Activated B cell treated with CpG ODN at 0.5 μM for 24 hours (primary cell): ENCODE measurements at regions of chr12 and their contacts with region 1.

Region 1: GRCh38 chr12:49188914-49189367 is at the start of gene TUBA1A:
- DNase-seq: peak; percentile 83
- ATAC-seq: peak; percentile 86
- H3K4me3 Mint-ChIP-seq: peak within 1 kb of the TSS; percentile 97
- H3K27ac Mint-ChIP-seq: peak within 1 kb of the TSS; percentile 99
- H3K4me1 Mint-ChIP-seq: peaks cover 20% of the 10 kb centered on the region
- H3K27me3 Mint-ChIP-seq: no peaks in the 10 kb centered on the region
- CTCF ChIP-seq: no peak
- total RNA-seq, gene TUBA1A: 114 and 115 TPM in 2 replicates

Region 2: DNA sequence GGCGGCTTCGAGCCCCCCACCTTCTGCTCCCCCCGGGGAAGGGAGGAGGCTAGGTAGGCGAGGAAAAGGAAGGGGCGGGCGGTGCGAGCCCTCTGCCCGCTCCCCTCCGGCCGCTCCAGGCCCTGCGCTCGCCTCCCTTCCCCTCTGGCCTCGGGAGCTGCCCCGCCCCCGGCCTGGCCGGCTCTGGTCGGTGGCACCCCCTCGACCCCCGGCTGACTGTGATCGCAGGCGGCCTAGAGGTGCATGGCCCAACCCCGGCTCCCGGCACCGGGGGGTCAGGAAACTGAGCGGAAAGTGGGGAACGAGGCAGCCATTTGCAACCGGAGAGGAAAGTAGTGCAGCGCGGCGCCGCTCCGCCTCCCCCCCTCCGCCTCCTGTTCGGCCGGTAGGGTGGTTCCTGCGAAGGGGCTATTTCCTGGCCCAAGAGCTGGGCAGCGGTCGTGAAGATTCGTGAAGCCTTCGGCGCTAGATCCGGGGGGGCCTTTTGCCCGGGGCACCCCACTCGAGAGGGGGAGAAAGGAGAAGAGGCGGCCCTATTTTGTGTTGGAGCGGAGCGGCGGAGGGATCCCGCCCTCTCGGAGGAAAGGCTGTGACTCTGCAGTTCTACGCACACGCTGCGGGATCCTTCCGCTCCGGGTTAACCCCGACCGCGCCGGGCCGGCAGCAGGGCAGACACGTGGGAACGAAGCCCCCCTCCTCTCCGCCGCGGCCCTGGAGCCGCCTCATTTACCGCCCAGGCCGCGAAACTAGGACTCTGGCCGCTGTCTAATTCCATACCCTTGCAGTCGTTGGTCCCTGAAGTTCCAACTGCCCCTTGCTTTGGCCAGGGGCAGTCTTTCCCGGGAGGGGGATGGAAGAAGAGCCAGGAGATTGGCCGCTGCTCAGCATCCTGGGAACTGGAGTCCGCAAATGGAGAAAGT is 128.4 kb before region 1 on chr12 and contains the start of gene KMT2D:
- CTCF ChIA-PET with region 1: no interaction called
- POLR2A ChIA-PET with region 1: interaction called, 4 read pairs
- intact Hi-C with region 1: loop called (anchors 2 kb)
- DNase-seq: peak; percentile 83
- ATAC-seq: peak; percentile 67
- H3K4me3 Mint-ChIP-seq: peak within 1 kb of the TSS; percentile 97
- H3K27ac Mint-ChIP-seq: peak within 1 kb of the TSS; percentile 97
- H3K4me1 Mint-ChIP-seq: peaks cover 50% of the 10 kb centered on the region
- H3K27me3 Mint-ChIP-seq: no peaks in the 10 kb centered on the region
- CTCF ChIP-seq: no peak
- total RNA-seq, gene KMT2D: 127 and 136 TPM in 2 replicates

Region 3: DNA sequence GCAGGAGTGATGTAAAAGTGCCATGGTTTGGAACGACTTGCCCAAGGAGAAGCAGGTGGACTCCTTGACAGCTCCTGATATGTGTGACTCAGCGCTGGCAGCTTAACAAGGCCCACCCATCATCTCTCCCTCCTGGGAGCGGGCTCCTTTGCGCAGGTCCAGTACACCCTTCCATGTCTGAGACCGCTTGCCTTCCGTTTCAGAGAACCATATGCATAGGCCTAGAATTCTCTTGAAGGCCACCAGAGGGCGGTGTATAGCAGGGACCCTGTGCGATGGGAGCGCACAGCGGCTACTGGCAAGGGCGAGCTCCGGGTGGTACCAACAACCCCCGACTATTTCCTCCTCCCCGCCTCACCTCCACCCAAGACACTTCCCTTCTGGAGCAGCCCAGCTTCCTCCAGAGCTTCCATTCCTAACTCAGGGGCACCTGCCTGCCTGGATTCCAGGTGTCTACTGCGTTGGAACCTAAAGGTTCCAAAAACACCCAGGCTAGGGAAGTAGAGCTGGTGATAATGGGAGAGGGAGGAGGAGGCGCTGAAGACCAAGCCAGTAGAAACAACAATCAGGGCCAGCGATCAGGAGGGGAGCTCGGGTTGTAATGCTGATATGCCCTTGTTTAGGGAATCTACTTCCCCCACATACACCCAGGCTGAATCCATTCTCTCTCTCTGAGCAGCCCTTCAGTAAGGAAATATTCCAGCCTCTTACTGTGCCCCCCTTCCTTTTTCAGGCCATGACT is 100.6 kb before region 1 on chr12:
- CTCF ChIA-PET with region 1: no interaction called
- POLR2A ChIA-PET with region 1: interaction called, 7 read pairs
- intact Hi-C with region 1: loop called (anchors 2 kb)
- DNase-seq: peak; percentile 53
- ATAC-seq: peak; percentile 93
- H3K4me3 Mint-ChIP-seq: peak overlapping the region; percentile 64
- H3K27ac Mint-ChIP-seq: no peak overlapping the region
- H3K4me1 Mint-ChIP-seq: peaks cover 42% of the 10 kb centered on the region
- H3K27me3 Mint-ChIP-seq: peaks cover 45% of the 10 kb centered on the region
- CTCF ChIP-seq: peak; percentile 35

Region 4: GRCh38 chr12:49161092-49161795 is 27.7 kb before region 1 on chr12:
- CTCF ChIA-PET with region 1: no interaction called
- POLR2A ChIA-PET with region 1: interaction called, 27 read pairs
- intact Hi-C with region 1: loop called (anchors 1 kb)
- DNase-seq: no peak
- ATAC-seq: peak; percentile 54
- H3K4me3 Mint-ChIP-seq: peak overlapping the region; percentile 53
- H3K27ac Mint-ChIP-seq: peak overlapping the region; percentile 90
- H3K4me1 Mint-ChIP-seq: peaks cover 37% of the 10 kb centered on the region
- H3K27me3 Mint-ChIP-seq: no peaks in the 10 kb centered on the region
- CTCF ChIP-seq: no peak

Region 5: GRCh38 chr12:49200919-49201594 is 12.1 kb after region 1 on chr12:
- CTCF ChIA-PET with region 1: interaction called, 4 read pairs
- POLR2A ChIA-PET with region 1: interaction called, 11 read pairs
- intact Hi-C with region 1: loop called (anchors 1 kb)
- DNase-seq: no peak
- ATAC-seq: peak; percentile 92
- H3K4me3 Mint-ChIP-seq: peak overlapping the region; percentile 5
- H3K27ac Mint-ChIP-seq: no peak overlapping the region
- H3K4me1 Mint-ChIP-seq: peaks cover 11% of the 10 kb centered on the region
- H3K27me3 Mint-ChIP-seq: no peaks in the 10 kb centered on the region
- CTCF ChIP-seq: no peak

Region 6: DNA sequence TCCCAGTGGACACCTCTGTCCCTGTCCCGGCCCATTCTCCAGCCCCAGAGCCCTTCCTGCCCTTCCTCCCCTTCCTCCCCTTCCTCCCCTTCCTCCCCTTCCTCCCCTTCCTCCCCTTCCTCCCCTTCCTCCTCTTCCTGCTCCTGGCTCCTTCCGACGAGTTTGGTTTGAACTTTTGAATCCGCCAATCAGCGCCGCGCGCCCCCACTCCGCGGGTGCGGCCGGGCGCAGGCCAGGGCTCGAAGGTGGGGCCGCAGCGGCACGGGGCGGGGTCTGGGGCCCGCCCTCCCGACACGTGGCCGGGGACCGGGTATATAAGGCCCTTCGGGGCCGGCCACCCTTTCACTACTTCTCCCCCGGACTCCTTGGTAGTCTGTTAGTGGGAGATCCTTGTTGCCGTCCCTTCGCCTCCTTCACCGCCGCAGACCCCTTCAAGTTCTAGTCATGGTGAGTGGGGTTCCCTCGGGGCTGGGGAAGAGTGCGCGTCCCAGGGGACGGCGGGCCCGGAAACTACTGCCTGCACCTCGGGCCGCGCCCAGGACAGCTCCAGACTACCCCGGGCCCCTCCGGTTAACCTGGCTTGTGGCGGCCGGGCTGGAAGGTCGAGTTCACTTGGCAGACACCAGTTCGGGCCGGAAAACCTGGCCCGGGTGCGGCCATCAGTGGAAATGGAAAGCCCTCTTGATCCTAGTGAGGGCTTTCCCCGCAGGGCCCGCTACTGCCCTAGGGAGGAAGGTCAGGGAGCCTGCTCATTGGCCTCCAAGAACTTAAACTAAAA is 76.0 kb after region 1 on chr12 and contains the start of gene TUBA1C:
- CTCF ChIA-PET with region 1: no interaction called
- POLR2A ChIA-PET with region 1: interaction called, 15 read pairs
- intact Hi-C with region 1: loop called (anchors 2 kb)
- DNase-seq: peak; percentile 90
- ATAC-seq: peak; percentile 90
- H3K4me3 Mint-ChIP-seq: peak within 1 kb of the TSS; percentile 94
- H3K27ac Mint-ChIP-seq: peak within 1 kb of the TSS; percentile 92
- H3K4me1 Mint-ChIP-seq: peaks cover 20% of the 10 kb centered on the region
- H3K27me3 Mint-ChIP-seq: no peaks in the 10 kb centered on the region
- CTCF ChIP-seq: no peak
- total RNA-seq, gene TUBA1C: 141 and 142 TPM in 2 replicates

Region 7: DNA sequence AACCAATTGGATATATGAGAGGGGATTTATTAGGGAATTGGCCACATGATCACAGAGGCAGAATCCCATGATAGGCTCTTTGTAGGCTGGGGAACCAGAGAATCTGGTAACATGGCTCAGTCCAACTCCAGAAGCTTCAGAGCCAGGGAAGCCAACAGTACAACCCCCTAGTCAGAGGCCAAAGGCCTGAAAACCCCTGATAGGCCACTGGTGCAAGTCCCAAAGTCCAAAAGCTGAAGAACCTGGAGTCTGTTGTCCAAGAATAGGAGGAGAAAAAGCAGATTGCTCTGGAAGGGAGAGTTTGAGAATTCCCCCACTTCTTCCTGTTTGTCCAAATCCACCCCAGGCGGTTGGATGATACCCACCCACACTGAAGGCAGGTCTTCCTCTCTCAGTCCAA is 125.9 kb after region 1 on chr12:
- CTCF ChIA-PET with region 1: no interaction called
- POLR2A ChIA-PET with region 1: no interaction called
- intact Hi-C with region 1: no loop called
- DNase-seq: no peak
- ATAC-seq: no peak
- H3K4me3 Mint-ChIP-seq: no peak overlapping the region
- H3K27ac Mint-ChIP-seq: no peak overlapping the region
- H3K4me1 Mint-ChIP-seq: no peaks in the 10 kb centered on the region
- H3K27me3 Mint-ChIP-seq: peaks cover 9% of the 10 kb centered on the region
- CTCF ChIP-seq: no peak